PC-9 (cell line): ENCODE measurements at regions of chr10 and their contacts with region 1.

Region 1: DNA sequence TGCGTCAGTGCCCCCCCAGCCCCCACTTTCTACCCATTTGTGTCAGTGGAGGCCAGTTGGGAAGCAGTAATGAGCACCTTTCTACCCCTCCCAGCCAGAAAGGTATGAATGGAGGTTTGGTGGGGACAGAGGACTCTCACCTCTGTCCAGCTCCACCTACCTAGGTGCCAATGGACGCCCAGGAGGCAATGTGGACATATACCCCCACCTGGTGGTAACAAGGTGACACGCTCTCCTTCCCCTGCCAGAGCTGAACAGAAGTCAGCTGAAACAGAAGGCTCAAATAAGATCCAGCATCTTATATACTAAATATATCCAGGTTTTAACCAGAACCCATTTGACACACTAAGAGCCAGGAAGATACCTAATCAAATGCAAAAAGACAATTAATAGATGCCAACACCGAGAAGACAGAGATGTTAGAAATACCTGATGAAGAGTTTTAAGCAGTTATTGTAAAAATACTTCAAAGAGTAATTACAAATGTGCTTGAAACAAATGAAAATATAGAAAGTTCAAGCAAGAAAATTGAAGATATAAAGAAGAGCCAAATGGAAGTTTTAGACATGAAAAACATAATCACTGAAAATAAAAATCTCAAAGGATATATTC is 18.4 kb upstream of the SORCS3 start:
- DNase-seq: peak in 1 of 2 experiments; percentile 24
- H3K4me3 ChIP-seq: no peak overlapping the region
- H3K27ac ChIP-seq: no peak overlapping the region
- H3K4me1 ChIP-seq: no peaks in the 10 kb centered on the region
- H3K27me3 ChIP-seq: no peaks in the 10 kb centered on the region
- CTCF ChIP-seq: peak; percentile 54

Region 2: DNA sequence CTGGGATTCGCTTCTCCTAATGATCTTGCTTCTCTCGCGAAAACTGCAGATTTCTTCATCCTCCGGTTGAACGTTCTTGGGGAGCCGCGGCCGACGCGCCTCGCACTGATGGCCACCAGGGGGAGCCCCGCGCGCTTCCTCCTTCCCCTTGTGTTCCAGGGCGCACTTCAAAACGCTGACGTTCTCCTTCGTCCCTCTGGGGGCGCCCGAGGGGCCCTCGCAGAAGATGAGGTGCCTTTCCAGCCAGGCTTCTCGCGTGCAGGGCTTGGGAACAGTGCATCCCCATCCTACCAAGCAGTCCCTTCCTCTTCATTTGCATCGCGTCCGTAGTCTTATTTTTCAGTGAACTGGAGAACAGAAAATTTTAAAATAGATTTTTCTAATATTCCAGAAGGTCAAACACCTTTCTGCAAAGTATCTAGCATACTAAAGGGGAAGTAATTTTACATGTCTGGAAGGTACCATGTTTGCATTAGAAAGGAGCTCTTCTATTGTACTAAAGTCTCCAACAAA is 331.2 kb before region 1 on chr10:
- CTCF ChIA-PET with region 1: no interaction called
- POLR2A ChIA-PET with region 1: no interaction called
- intact Hi-C with region 1: loop called (anchors 2 kb)
- DNase-seq: peak; percentile 58 to 71
- H3K4me3 ChIP-seq: no peak overlapping the region
- H3K27ac ChIP-seq: no peak overlapping the region
- H3K4me1 ChIP-seq: 0 out of 2 replicates have a peak, but pooled peaks cover 3% of the 10 kb centered on the region
- H3K27me3 ChIP-seq: no peaks in the 10 kb centered on the region
- CTCF ChIP-seq: peak; percentile 95

Region 3: GRCh38 chr10:104580774-104581675 is 41.7 kb before region 1 on chr10:
- CTCF ChIA-PET with region 1: no interaction called
- POLR2A ChIA-PET with region 1: no interaction called
- intact Hi-C with region 1: loop called (anchors 2 kb)
- DNase-seq: peak in 1 of 2 experiments; percentile 58
- H3K4me3 ChIP-seq: no peak overlapping the region
- H3K27ac ChIP-seq: no peak overlapping the region
- H3K4me1 ChIP-seq: no peaks in the 10 kb centered on the region
- H3K27me3 ChIP-seq: peaks cover 20% of the 10 kb centered on the region; the same call in 1 of the 2 replicates
- CTCF ChIP-seq: peak; percentile 71